Prostate gland (tissue), 2 donors: ENCODE measurements at regions of chr2 and their contacts with region 1.

Region 1: DNA sequence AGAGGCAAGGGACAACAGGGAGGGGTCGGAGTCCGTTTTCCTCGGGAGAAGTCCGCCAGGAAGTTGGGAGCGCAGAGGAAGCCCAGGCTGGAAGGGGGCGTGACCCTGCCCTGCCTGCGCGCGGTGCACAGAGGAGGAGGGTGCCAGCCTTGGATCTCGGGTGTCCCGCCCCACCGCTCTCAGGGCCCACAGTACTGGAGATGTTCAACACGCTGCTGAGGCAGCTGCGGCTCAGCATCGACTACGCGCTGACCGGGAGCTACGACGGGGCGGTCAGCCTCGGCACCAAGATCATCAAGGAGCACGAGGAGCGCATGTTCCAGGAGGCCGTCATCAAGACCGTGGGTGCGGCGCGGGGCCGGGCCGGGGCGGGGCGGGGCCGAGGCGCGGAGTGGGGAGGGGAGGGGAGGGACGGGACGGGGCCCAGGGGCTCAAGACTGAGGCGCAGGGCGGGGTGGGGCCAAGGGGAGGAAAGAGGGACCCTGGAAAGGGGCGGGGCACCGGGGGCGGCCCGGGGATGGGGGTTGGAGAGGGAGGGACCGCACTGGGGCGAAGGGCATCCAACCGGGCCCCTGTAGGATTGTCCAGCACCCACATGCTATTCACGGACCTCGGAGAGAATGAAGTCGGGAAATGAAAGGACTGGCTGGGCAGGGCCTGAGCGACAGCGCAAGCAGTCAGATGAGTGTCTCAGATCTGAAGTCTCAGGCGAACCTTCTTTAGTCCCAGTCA is 36.6 kb downstream of the POMC start:
- DNase-seq: no peak
- H3K4me3 ChIP-seq: peak overlapping the region; percentile 6 to 20
- H3K27ac ChIP-seq: no peak overlapping the region
- H3K4me1 ChIP-seq: no peaks in the 10 kb centered on the region
- H3K27me3 ChIP-seq: no peaks in the 10 kb centered on the region
- CTCF ChIP-seq: no peak
- POLR2A ChIP-seq: no peak

Region 2: DNA sequence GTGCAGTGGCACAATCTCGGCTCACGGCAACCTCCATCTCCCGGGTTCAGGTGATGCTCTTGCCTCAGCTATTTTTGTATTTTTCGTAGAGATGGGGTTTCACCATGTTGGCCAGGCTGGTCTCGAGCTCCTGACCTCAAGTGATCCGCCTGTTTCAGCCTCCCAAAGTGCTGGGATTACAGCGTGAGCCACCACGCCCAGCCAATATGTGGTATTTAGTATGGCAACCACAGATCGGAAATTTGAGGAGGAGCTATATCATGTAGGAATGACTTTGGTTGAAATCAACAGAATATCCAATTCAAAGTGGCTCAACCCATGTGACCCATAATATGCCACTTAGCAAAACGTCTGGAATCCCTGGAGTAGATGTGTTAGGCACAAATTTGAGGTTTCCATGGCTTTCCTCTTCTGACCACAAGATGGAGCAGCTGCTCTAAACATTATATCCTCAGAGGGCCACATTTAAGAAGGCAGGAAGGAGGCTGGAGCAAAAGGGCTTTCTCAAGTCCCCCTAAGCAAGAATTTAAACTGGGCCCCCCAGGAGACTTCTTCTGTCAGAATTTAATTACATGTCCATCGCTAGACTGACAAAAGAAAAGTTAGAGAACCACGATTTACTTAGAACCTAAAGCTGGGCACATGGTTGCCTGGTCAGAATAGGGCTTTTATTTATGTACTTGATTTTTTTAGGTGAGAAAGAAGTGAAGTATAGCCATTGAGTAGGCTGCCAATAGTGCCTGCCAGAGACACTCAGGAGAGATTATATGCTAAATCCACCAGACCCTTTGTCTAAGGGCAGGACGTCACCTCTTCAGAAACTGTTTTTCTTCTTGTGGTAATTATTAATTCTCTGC is 721.8 kb before region 1 on chr2:
- intact Hi-C with region 1: loop called (anchors 10 kb)
- DNase-seq: peak; percentile 39
- H3K4me3 ChIP-seq: no peak overlapping the region
- H3K27ac ChIP-seq: no peak overlapping the region
- H3K4me1 ChIP-seq: no peaks in the 10 kb centered on the region
- H3K27me3 ChIP-seq: no peaks in the 10 kb centered on the region
- CTCF ChIP-seq: peak; percentile 22 to 79 (median 79)
- POLR2A ChIP-seq: no peak

Region 3: DNA sequence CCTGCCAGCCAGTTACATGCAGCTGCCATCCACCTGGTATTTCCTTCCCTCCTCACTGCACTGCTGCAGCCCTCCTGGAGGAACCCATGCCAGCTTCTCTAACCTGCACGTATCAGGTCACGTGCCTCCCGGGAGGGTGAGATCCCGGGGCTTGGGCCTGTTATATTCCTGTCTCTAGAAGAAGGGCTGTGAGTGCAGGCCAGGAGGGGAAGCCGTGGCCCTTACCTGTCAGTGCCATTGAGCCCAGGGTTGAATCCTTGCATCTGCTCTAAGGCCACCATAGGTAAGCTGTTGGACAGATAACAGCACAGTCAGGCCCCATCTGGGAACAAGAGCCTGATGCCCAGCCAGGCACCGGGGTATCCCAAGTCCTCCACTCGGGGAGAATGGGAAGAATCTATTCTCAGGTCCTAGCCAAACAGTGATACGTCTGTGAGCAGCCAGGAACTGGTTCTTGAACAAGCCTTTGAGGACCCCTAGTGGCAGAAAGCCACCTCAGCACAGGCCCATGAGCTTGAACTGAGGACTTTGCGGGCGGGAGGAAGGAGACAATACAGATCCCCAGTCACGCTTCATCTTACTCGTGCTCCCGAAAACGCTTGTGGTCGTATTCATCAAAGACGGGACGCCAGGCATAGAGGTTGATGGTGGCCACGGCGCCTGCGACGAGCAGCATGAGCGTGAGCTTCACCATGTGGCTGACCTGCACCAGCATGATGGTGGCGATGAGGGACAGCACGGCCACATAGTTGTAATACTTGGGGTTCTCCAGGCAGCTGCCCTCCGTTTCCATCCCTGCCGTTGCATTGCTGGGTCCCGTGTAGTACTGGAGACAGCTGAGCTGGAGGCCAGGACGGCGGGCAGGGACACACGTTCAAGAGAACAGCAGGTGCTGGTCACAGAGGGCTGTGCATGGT is 304.2 kb before region 1 on chr2:
- intact Hi-C with region 1: loop called (anchors 10 kb)
- DNase-seq: peak; percentile 79
- H3K4me3 ChIP-seq: no peak overlapping the region
- H3K27ac ChIP-seq: no peak overlapping the region
- H3K4me1 ChIP-seq: no peaks in the 10 kb centered on the region
- H3K27me3 ChIP-seq: no peaks in the 10 kb centered on the region
- CTCF ChIP-seq: peak in 3 of 4 experiments; percentile 87 to 91 (median 87)
- POLR2A ChIP-seq: no peak

Region 4: DNA sequence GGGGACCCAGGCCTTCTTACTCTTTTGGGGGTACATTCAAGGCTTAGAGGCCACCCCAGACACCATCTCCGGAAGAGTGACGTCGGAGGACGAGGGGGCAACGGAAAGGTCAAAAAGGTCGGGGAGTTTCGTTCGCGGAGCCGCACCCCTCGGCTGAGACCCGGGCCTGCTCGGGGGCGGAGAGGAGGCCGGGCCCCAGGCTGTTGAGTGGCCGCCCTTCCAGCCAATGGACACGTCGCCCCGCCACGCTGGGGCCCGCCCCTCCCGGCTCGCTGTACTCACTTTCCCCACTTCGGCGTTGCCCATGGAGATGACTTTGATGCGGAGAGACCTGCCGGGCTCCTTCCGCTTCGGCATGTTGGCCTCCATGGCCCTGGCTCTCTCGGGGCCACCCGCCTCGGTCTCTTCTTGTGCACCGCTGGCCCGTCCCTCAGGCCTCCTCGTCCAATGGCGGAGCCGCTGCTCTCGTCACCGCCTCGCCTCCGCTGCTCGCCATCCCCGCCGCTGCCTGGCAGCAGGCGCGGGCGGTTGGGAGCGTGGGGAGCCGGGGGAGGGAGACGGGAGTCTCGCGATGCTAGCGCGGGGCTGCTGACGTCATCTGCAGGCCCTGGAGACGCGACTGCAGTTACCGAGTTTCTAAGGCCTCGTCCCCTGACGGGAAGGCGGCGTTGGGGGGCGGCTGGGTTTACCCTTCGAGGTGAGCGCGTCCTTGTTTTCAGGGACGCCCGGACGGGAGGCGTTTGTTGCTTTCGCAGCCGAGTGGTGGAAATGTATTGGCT is 160.0 kb before region 1 on chr2 and contains the start of gene DNAJC27:
- intact Hi-C with region 1: loop called (anchors 2 kb)
- DNase-seq: peak; percentile 97
- H3K4me3 ChIP-seq: peak within 1 kb of the TSS; percentile 55 to 86
- H3K27ac ChIP-seq: peak within 1 kb of the TSS; percentile 96 to 100
- H3K4me1 ChIP-seq: no peaks in the 10 kb centered on the region
- H3K27me3 ChIP-seq: no peaks in the 10 kb centered on the region
- CTCF ChIP-seq: peak in 1 of 4 experiments; percentile 32
- POLR2A ChIP-seq: peak; percentile 97
- total RNA-seq, gene DNAJC27: 3.0 to 9.2 TPM

Region 5: GRCh38 chr2:25041928-25042320 is 89.8 kb before region 1 on chr2 and contains the start of gene EFR3B:
- intact Hi-C with region 1: loop called (anchors 5 kb)
- DNase-seq: peak; percentile 94
- H3K4me3 ChIP-seq: peak within 1 kb of the TSS; percentile 53 to 58
- H3K27ac ChIP-seq: peak within 1 kb of the TSS in 1 of 2 donors; percentile 48
- H3K4me1 ChIP-seq: no peaks in the 10 kb centered on the region
- H3K27me3 ChIP-seq: no peaks in the 10 kb centered on the region
- CTCF ChIP-seq: peak in 2 of 4 experiments; percentile 24 to 25
- POLR2A ChIP-seq: peak; percentile 46
- total RNA-seq, gene EFR3B: 0.14 to 1.6 TPM